ENCODE measurements at regions of chr7 and their contacts with region 1.

Region 1: GRCh38 chr7:135620980-135621850 is 41.1 kb upstream of the STMP1 start:
- DNase-seq: peak; percentile 32
- ATAC-seq: no peak
- H3K4me3 Mint-ChIP-seq: no peak overlapping the region
- H3K27ac Mint-ChIP-seq: no peak overlapping the region
- H3K4me1 Mint-ChIP-seq: no peaks in the 10 kb centered on the region
- H3K27me3 Mint-ChIP-seq: no peaks in the 10 kb centered on the region

Region 2: GRCh38 chr7:135602304-135602703 is 18.9 kb before region 1 on chr7:
- CTCF ChIA-PET with region 1: interaction called, 6 read pairs
- POLR2A ChIA-PET with region 1: no interaction called
- intact Hi-C with region 1: loop called in 1 of 2 experiments (anchors 2 kb)
- DNase-seq: no peak
- ATAC-seq: no peak
- H3K4me3 Mint-ChIP-seq: no peak overlapping the region
- H3K27ac Mint-ChIP-seq: peak overlapping the region; percentile 40
- H3K4me1 Mint-ChIP-seq: peaks cover 3% of the 10 kb centered on the region
- H3K27me3 Mint-ChIP-seq: no peaks in the 10 kb centered on the region

Measured in activated CD4-positive, alpha-beta T cell treated with anti-CD3 and anti-CD28 coated beads for 36 hours (primary cell).